ENCODE measurements at regions of chr13 and their contacts with region 1.

Region 1: DNA sequence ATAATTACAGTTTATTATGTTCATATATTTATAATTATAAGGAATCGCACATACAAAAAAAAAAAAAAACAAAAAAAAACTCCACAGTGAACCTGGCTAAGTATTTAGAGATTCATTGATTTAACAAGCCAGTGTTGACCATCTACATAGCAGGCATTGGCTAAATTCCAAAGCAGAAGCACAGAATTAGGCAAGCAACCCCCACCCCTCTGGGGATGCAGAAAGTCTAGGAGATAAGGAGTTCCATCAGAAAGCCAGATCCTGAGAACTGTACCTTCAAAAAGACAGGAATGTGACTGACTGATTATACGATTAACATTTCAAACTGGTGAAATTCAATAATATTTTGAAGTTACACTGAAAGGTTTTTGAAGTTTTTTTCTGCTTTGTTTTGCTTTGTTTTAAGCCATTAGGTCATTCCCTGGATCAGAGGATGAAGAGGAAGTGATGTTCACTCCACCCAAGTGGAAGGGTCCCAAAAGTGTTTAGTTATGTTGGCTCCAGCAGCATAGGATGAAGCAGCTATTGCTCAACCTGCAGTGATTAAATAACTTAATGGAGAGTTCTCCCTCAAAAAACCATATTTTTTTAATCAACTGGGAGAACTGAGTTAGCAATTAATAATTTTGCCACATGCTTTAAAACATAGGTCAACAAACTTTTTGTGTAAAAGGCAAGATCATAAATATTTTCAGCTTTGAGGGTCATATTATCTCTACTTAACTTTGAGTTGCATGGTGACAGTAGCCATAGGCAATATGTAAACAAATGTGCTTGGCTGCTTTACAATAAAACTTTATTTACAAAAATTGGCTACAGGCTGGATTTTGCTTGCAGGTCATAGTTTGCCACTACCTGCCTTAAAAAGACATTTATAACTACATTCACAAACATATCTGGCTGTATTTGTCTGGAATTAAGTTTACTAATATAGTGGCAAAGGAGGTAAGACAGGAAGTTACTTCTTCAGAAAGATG is 49.6 kb downstream of the DOCK9 start:
- DNase-seq: peak; percentile 79
- H3K4me3 ChIP-seq: no peak overlapping the region
- H3K27ac ChIP-seq: peak overlapping the region; percentile 59
- H3K4me1 ChIP-seq: peaks cover 13% of the 10 kb centered on the region
- H3K27me3 ChIP-seq: no peaks in the 10 kb centered on the region
- CTCF ChIP-seq: no peak
- POLR2A ChIP-seq: no peak

Region 2: GRCh38 chr13:98370806-98371515 is 557.3 kb before region 1 on chr13:
- CTCF ChIA-PET with region 1: no interaction called
- POLR2A ChIA-PET with region 1: no interaction called
- dilution Hi-C with region 1: no loop called
- intact Hi-C with region 1: no loop called
- DNase-seq: no peak
- H3K4me3 ChIP-seq: no peak overlapping the region
- H3K27ac ChIP-seq: no peak overlapping the region
- H3K4me1 ChIP-seq: no peaks in the 10 kb centered on the region
- H3K27me3 ChIP-seq: no peaks in the 10 kb centered on the region
- CTCF ChIP-seq: no peak
- POLR2A ChIP-seq: no peak

Region 3: GRCh38 chr13:98664039-98664438 is 264.2 kb before region 1 on chr13:
- CTCF ChIA-PET with region 1: no interaction called
- POLR2A ChIA-PET with region 1: no interaction called
- dilution Hi-C with region 1: no loop called
- intact Hi-C with region 1: no loop called
- DNase-seq: no peak
- H3K4me3 ChIP-seq: no peak overlapping the region
- H3K27ac ChIP-seq: no peak overlapping the region
- H3K4me1 ChIP-seq: no peaks in the 10 kb centered on the region
- H3K27me3 ChIP-seq: peaks cover 13 to 14% of the 10 kb centered on the region in 2 experiments
- CTCF ChIP-seq: no peak
- POLR2A ChIP-seq: no peak

Region 4: GRCh38 chr13:98947925-98948324 is 19.7 kb after region 1 on chr13:
- CTCF ChIA-PET with region 1: no interaction called
- POLR2A ChIA-PET with region 1: interaction called, 3 read pairs
- dilution Hi-C with region 1: no loop called
- intact Hi-C with region 1: loop called (anchors 2 kb)
- DNase-seq: peak; percentile 75
- H3K4me3 ChIP-seq: no peak overlapping the region
- H3K27ac ChIP-seq: peak overlapping the region; percentile 54
- H3K4me1 ChIP-seq: peaks cover 48% of the 10 kb centered on the region
- H3K27me3 ChIP-seq: no peaks in the 10 kb centered on the region
- CTCF ChIP-seq: no peak
- POLR2A ChIP-seq: no peak

Region 5: GRCh38 chr13:99821741-99822140 is 893.5 kb after region 1 on chr13:
- CTCF ChIA-PET with region 1: no interaction called
- POLR2A ChIA-PET with region 1: no interaction called
- dilution Hi-C with region 1: no loop called
- intact Hi-C with region 1: no loop called
- DNase-seq: no peak
- H3K4me3 ChIP-seq: no peak overlapping the region
- H3K27ac ChIP-seq: no peak overlapping the region
- H3K4me1 ChIP-seq: no peaks in the 10 kb centered on the region
- H3K27me3 ChIP-seq: no peaks in the 10 kb centered on the region
- CTCF ChIP-seq: no peak
- POLR2A ChIP-seq: no peak

Measured in endothelial cell of umbilical vein (primary cell).